ENCODE measurements at regions of chr10 and their contacts with region 1.

Region 1: GRCh38 chr10:102009801-102010425 is 46.1 kb downstream of the ARMH3 start:
- DNase-seq: peak; percentile 31
- ATAC-seq: peak; percentile 96
- H3K4me3 Mint-ChIP-seq: no peak overlapping the region
- H3K27ac Mint-ChIP-seq: peak overlapping the region; percentile 1; the same call in 1 of the 2 replicates
- H3K4me1 Mint-ChIP-seq: peaks cover 21% of the 10 kb centered on the region
- H3K27me3 Mint-ChIP-seq: no peaks in the 10 kb centered on the region
- CTCF ChIP-seq: peak; percentile 53

Region 2: GRCh38 chr10:101830322-101831168 is 179.4 kb before region 1 on chr10:
- CTCF ChIA-PET with region 1: interaction called, 36 read pairs
- POLR2A ChIA-PET with region 1: no interaction called
- DNase-seq: peak; percentile 85
- ATAC-seq: peak; percentile 57
- H3K4me3 Mint-ChIP-seq: peak overlapping the region; percentile 78
- H3K27ac Mint-ChIP-seq: peak overlapping the region; percentile 82
- H3K4me1 Mint-ChIP-seq: peaks cover 26% of the 10 kb centered on the region
- H3K27me3 Mint-ChIP-seq: peaks cover 3% of the 10 kb centered on the region
- CTCF ChIP-seq: no peak

Region 3: DNA sequence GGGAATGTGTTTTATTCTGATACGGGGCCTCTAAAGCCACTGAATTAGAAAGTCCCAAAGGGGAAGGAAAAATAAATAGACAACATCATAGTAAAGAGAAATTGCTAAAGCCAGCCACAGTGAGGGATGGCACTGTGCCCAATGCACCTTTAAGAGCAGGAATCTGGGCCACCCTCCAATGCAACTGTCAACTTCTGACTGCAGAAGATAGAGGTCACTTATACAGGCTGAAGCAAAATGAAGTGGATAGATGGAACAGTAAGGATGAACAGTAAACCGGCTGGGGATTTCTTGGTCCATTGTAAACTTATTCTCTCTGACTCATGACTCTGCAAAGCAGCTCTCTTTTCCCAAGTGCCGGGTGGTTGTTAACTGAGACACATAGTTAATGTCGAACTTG is 112.3 kb before region 1 on chr10:
- CTCF ChIA-PET with region 1: interaction called, 147 read pairs
- POLR2A ChIA-PET with region 1: interaction called, 6 read pairs
- DNase-seq: no peak
- ATAC-seq: no peak
- H3K4me3 Mint-ChIP-seq: no peak overlapping the region
- H3K27ac Mint-ChIP-seq: no peak overlapping the region
- H3K4me1 Mint-ChIP-seq: peaks cover 26% of the 10 kb centered on the region
- H3K27me3 Mint-ChIP-seq: no peaks in the 10 kb centered on the region
- CTCF ChIP-seq: no peak

Region 4: GRCh38 chr10:101995451-101996063 is 14.4 kb before region 1 on chr10:
- CTCF ChIA-PET with region 1: interaction called, 25 read pairs
- POLR2A ChIA-PET with region 1: no interaction called
- DNase-seq: no peak
- ATAC-seq: no peak
- H3K4me3 Mint-ChIP-seq: no peak overlapping the region
- H3K27ac Mint-ChIP-seq: no peak overlapping the region
- H3K4me1 Mint-ChIP-seq: no peaks in the 10 kb centered on the region
- H3K27me3 Mint-ChIP-seq: no peaks in the 10 kb centered on the region
- CTCF ChIP-seq: no peak

Region 5: DNA sequence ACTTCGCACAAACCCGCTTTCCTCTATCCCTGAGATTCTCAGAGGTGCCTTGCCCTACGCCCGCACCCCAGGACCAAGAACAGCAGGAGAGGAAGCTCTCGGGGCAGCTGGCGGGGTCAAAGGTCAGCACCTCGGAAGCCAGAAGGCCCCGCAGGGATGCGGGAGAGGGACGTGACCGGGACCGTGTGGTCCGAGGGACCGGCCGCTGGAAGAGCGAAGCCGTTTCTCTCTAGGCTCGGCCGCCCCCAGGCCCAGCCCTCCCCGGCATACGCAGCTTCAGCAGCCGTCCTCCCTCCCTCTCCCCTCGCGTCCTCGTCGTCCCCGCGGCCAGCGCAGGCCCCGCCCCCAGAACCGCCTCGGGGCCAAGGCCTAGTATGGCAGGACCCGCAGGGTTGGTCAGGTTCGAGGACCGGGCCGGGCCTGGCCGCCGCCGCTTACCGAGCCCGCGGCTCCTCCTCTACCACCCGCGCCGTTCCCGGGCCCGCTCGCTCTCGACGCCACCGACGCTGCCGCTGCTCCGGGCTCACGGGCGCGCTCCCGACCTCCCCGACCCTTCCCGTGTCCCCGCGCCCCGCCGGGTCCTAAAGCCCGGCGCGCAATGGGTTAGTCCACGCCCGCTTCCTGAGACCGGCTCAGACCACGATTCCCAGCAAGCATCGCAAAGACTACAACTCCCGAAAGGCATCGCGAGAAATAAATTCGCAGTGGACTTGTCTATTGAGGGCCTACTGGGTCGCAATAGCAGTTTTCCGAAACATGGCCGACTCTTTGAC is 45.9 kb after region 1 on chr10 and contains the start of gene ARMH3:
- CTCF ChIA-PET with region 1: interaction called, 13 read pairs
- POLR2A ChIA-PET with region 1: no interaction called
- DNase-seq: peak; percentile 93
- ATAC-seq: peak; percentile 94
- H3K4me3 Mint-ChIP-seq: peak within 1 kb of the TSS; percentile 95
- H3K27ac Mint-ChIP-seq: peak within 1 kb of the TSS; percentile 95
- H3K4me1 Mint-ChIP-seq: peaks cover 19% of the 10 kb centered on the region
- H3K27me3 Mint-ChIP-seq: no peaks in the 10 kb centered on the region; the same call in none of the 2 replicates
- CTCF ChIP-seq: no peak
- total RNA-seq, gene ARMH3: 16.0 to 17.9 TPM (median 17.1 TPM) in 3 replicates

Region 6: DNA sequence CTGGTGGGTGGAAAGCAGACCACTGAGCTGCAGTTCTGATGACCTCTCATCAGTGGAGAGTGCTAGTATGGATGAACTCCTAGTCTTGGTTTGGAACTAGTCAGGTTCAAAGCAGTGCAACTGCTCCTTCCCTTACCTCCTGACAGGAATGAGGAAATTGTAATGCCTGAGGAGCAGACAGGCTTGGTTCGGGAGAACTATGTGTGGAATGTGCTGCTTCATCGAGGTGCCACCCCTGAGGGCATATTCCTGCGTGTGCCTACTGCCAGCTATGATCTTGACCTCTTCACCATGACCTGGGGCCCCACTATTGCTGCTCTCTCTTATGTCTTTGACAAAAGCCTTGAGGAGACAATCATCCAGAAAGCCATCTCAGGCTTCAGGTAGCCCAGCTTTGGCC is 358.2 kb after region 1 on chr10:
- CTCF ChIA-PET with region 1: no interaction called
- POLR2A ChIA-PET with region 1: no interaction called
- DNase-seq: no peak
- ATAC-seq: no peak
- H3K4me3 Mint-ChIP-seq: no peak overlapping the region
- H3K27ac Mint-ChIP-seq: no peak overlapping the region
- H3K4me1 Mint-ChIP-seq: no peaks in the 10 kb centered on the region
- H3K27me3 Mint-ChIP-seq: no peaks in the 10 kb centered on the region
- CTCF ChIP-seq: no peak